Activated CD4-positive, alpha-beta memory T cell treated with anti-CD3 and anti-CD28 coated beads for 36 hours (primary cell): ENCODE measurements at regions of chrX and their contacts with region 1.

Region 1: DNA sequence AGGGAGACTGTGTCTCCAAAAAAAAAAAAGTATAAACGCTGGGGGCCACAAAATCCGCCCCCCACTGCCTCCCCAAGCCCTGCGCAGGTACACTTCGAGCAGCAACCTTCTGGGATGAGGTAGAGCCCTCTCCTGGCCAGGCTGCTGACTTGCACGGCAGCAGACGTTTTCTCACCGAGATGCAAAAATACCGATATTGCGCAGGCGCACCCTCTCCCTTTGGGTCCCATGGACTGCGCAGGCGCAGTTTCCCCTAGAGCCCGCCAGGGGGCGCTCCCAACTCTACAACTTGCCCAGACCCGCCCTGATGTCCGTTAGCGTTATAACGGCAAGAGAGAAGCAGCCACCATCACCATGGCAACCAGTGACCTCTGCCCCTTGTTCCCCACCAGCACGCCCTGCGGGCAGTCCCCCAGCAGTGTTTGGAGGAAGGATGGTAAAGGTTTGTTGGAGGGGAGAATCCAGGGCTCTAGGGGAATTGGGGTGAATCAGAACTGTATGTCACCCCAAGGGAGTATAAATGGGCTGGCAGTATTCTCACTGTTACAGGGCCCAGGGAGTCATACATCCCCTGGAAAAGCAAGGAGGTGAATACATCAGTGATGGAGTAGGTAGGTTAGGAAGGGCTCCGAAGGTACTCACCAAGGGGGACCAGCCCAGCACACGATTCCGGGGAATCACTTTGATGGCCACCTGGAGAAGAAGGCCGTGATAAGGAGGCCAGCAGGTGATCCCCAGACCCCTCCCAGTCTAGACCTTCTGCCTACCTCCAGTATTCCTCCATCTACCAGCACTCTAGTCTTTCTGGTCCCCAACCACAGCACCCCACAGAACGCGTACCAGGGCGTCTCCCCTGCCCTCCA is 1.5 kb downstream of the PIM2 start:
- DNase-seq: peak; percentile 93
- H3K4me3 Mint-ChIP-seq: peak overlapping the region; percentile 98
- H3K27ac Mint-ChIP-seq: peak overlapping the region; percentile 99
- H3K4me1 Mint-ChIP-seq: peaks cover 36% of the 10 kb centered on the region
- H3K27me3 Mint-ChIP-seq: peaks cover 4% of the 10 kb centered on the region

Region 2: GRCh38 chrX:48539345-48540027 is 377.9 kb before region 1 on chrX and contains the start of gene TBC1D25:
- CTCF ChIA-PET with region 1: no interaction called
- POLR2A ChIA-PET with region 1: no interaction called
- intact Hi-C with region 1: loop called (anchors 1 kb)
- DNase-seq: peak; percentile 98
- H3K4me3 Mint-ChIP-seq: peak within 1 kb of the TSS; percentile 84
- H3K27ac Mint-ChIP-seq: peak within 1 kb of the TSS; percentile 97
- H3K4me1 Mint-ChIP-seq: peaks cover 19% of the 10 kb centered on the region
- H3K27me3 Mint-ChIP-seq: no peaks in the 10 kb centered on the region
- total RNA-seq, gene TBC1D25: 13.5 to 16.2 TPM

Region 3: GRCh38 chrX:48715072-48715471 is 202.3 kb before region 1 on chrX:
- CTCF ChIA-PET with region 1: interaction called, 5 read pairs
- POLR2A ChIA-PET with region 1: no interaction called
- intact Hi-C with region 1: loop called (anchors 10 kb)
- DNase-seq: no peak
- H3K4me3 Mint-ChIP-seq: no peak overlapping the region
- H3K27ac Mint-ChIP-seq: peak overlapping the region; percentile 84
- H3K4me1 Mint-ChIP-seq: peaks cover 79% of the 10 kb centered on the region
- H3K27me3 Mint-ChIP-seq: no peaks in the 10 kb centered on the region

Region 4: DNA sequence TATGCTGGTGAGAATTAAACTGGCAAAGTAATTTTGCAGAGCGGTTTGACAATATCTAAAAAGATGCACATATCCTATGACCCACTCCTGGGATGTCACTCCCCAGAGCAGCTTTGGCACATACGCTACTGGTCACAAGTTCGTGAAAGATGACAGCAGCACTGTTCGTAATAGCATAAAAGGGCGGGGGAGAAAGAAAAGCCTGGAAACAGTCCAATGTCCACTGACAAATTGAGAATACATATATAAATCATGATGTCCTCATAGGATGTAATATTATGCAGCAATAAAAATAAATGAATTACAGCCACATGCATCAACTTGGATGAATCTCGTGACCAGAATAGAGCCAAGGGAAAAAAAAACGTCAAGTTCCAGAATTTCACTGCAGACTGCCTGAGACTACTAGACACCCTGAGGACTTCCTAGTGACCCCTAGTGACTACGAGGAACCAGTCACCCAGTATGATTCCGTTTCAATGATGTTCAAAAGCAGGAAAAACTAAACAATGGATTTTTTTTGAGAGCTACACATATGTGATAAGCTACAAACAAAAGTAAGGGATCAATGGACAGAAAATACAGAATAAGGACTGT is 83.7 kb before region 1 on chrX:
- CTCF ChIA-PET with region 1: no interaction called
- POLR2A ChIA-PET with region 1: no interaction called
- intact Hi-C with region 1: no loop called
- DNase-seq: no peak
- H3K4me3 Mint-ChIP-seq: no peak overlapping the region
- H3K27ac Mint-ChIP-seq: no peak overlapping the region
- H3K4me1 Mint-ChIP-seq: peaks cover 15% of the 10 kb centered on the region
- H3K27me3 Mint-ChIP-seq: peaks cover 26% of the 10 kb centered on the region

Region 5: DNA sequence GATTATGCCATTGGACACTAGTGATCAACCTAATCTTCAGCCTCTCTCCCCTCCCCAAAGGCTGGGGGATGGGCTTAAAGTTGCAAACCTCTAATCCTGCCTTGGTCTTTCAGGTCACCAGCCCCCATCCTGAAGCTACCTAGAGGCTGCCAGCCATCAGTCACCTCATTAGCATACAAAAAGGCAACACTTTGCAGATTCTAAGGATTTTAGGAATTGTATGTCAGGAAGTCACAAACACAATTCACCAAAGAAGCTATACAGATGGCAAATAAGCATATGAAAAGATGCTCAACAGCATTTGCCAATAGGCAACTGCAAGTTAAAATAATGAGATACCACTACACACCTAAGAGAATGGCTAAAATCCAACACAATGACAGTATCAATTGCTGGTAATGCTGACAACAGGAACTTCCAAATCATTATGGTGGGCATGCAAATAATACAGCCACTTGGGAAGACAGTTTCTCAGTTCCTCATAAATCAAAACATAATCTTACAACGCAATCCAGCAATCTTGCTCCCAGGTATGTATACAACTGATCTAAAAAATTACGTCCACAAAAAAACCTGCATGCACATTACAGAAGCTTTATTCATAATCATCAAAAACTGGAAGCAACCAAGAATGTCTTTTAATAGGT is 10.5 kb after region 1 on chrX:
- CTCF ChIA-PET with region 1: no interaction called
- POLR2A ChIA-PET with region 1: interaction called, 286 read pairs
- intact Hi-C with region 1: no loop called
- DNase-seq: no peak
- H3K4me3 Mint-ChIP-seq: no peak overlapping the region
- H3K27ac Mint-ChIP-seq: peak overlapping the region; percentile 45
- H3K4me1 Mint-ChIP-seq: peaks cover 33% of the 10 kb centered on the region
- H3K27me3 Mint-ChIP-seq: no peaks in the 10 kb centered on the region

Region 6: DNA sequence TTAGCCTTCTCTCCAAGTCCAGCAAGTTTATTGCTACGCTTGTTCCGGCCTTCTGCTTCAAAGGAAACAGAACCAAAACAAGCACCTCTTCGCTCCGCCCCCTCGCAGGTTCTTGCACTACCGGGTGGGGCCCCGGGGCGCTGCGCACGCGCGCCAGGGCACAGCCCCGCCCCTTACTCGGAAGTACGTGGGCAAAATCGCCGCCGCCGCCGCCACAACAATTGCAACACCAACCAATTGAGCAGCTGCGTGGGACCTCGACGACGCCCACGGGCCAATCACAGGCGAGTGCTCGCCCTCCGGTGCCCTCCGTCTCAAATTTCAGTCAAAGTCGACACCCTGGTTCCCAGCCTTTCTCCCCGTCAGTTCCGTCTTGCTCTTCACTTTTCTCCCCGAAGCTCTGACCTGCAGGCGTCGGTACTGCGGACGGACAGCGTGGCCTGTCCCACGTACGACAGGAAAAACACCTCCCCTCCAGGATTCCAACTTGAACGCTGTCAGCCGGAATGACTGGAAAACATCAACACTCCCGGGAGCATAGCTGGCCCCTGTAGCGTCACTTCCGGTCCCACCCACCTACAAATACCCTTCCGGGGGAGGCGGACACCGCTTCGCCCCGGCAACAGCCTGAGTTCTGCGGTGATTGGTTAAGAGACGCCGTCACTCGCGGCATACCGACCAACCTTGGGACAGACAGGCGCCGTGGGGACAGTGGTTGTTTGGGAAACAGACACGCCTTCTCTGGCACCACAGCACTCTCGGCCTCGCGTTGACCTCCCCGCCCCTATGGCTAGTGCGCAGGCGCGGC is 40.7 kb after region 1 on chrX:
- CTCF ChIA-PET with region 1: no interaction called
- POLR2A ChIA-PET with region 1: interaction called, 11 read pairs
- intact Hi-C with region 1: loop called (anchors 1 kb)
- DNase-seq: peak; percentile 95
- H3K4me3 Mint-ChIP-seq: peak overlapping the region; percentile 99
- H3K27ac Mint-ChIP-seq: peak overlapping the region; percentile 100
- H3K4me1 Mint-ChIP-seq: peaks cover 32% of the 10 kb centered on the region
- H3K27me3 Mint-ChIP-seq: no peaks in the 10 kb centered on the region